ENCODE measurements at regions of chr9 and their contacts with region 1.

Region 1: DNA sequence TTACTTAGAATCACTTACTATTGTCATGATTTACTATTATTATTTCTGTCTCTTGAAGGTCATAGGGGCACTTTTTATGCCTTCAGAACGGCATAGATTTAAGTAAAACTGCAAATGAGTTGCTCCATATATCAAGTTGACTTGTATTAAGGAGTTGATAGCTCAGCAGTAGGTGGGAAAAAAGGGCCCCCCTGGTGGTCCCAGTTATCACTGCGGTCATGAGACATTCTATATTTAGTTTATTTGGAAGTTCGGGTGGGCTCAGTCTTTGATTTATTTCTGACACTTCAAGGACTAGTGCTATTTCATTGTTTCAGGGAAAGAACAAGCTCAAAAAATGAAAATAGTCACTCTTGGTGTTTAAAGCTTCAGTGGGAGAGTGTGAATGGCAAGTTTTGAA is 159.3 kb downstream of the SLC24A2 start:
- DNase-seq: peak; percentile 27
- H3K4me3 ChIP-seq: no peak overlapping the region; a peak in 1 of 4 replicates
- H3K27ac ChIP-seq: no peak overlapping the region
- H3K4me1 ChIP-seq: peaks cover 0 to 8% of the 10 kb centered on the region in 2 experiments; a peak in 2 of 4 replicates
- H3K27me3 ChIP-seq: no peaks in the 10 kb centered on the region; the same call in 1 of the 2 replicates
- CTCF ChIP-seq: peak; percentile 40; the same call in 1 of the 2 replicates
- EP300 ChIP-seq: no peak
- RAD21 ChIP-seq: no peak

Region 2: DNA sequence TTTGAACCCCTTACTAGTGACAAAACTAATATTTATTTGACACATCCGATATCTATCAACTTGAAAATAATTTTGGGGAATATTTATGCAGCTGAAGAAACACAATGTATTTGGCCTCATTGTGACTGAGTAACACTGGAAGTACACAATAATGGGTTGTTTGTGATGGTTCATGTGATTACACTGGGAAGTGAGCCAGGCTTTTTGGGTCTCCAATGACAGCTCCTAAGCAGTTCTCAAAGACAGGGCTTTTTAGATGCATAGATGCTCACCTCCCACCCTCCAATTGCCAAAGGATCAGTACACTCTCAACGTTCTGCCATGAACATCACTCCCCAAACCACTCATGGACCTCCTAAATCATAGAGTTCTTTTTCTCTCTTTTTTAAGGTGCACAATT is 10.7 kb before region 1 on chr9:
- CTCF ChIA-PET with region 1: interaction called, 18 read pairs
- POLR2A ChIA-PET with region 1: interaction called, 3 read pairs
- DNase-seq: no peak
- H3K4me3 ChIP-seq: no peak overlapping the region
- H3K27ac ChIP-seq: peak overlapping the region in 1 of 2 experiments; percentile 39; a peak in 2 of 4 replicates
- H3K4me1 ChIP-seq: peaks cover 0 to 7% of the 10 kb centered on the region in 2 experiments; a peak in 2 of 4 replicates
- H3K27me3 ChIP-seq: no peaks in the 10 kb centered on the region
- CTCF ChIP-seq: no peak
- EP300 ChIP-seq: no peak
- RAD21 ChIP-seq: no peak